ENCODE measurements at regions of chr7 and their contacts with region 1.

Region 1: GRCh38 chr7:444606-445005 is 75.0 kb downstream of the PDGFA start:
- DNase-seq: no peak
- H3K4me3 ChIP-seq: no peak overlapping the region
- CTCF ChIP-seq: no peak

Region 2: GRCh38 chr7:480531-481218 is 36.1 kb after region 1 on chr7:
- in situ Hi-C with region 1: loop called (anchors 5 kb)
- DNase-seq: no peak
- H3K4me3 ChIP-seq: no peak overlapping the region
- CTCF ChIP-seq: no peak

Measured in astrocyte of the cerebellum (primary cell).